GM18951 (cell line): ENCODE measurements at regions of chr16 and their contacts with region 1.

Region 1: DNA sequence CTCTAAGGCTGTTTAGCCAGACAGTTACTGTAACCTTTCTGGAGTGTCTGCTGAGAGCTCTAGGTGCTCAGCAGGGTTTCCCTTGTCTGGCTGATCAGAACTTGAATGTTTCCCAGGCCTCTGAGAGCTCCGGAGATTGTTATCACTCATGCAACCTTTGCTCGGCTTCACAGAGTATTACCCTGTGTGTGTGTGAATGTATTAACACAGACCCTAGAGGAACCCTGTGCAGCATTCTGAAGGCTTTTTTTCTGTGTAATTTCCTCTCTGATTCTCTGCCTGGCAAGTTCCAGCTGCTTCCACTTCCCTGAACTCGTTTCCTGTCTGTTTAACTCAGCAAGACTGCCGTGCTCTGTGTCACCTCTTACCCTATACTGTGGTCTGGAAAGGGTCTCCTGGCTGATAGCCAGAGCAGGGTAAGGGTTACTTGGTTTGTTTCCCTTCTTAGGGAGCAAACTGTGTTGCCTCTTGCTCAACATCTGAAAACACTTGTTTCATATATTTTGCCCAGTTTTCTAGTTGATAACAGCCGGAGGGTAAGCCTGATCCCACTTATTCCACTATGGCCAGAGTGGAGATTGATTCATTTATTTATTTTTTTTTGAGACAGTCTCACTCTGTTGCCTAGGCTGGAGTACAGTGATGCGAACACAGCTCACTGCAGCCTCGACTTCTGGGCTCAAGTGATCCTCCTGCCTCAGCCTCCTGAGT is 21.7 kb downstream of the PRMT7 start:
- POLR2A ChIP-seq: no peak

Region 2: GRCh38 chr16:68237243-68238028 is 95.1 kb before region 1 on chr16:
- in situ Hi-C with region 1: no loop called
- POLR2A ChIP-seq: peak; percentile 81

Region 3: DNA sequence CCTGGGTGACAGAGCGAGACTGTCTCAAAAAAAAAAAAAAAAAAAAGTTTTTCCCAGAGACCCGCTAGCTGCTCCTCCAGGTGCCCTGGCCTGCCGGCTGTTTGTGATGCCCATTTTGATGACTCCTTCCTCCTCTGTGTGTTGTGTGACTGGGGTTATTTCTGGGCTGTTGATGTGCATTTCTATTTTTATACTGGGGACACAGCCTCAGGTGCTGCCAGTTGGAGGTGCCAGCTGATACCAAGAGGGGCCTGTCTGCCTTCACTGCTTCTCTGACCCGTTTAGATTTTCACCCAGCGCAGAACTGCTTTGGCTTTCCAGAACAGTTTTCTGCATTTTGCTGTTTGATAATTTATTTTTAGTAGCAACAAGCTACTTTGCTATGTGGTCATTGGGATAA is 80.7 kb before region 1 on chr16:
- in situ Hi-C with region 1: no loop called
- POLR2A ChIP-seq: no peak

Region 4: GRCh38 chr16:68264128-68265077 is 68.2 kb before region 1 on chr16 and contains the start of gene SLC7A6:
- in situ Hi-C with region 1: loop called (anchors 5 kb)
- POLR2A ChIP-seq: peak; percentile 86

Region 5: GRCh38 chr16:68298907-68299561 is 33.5 kb before region 1 on chr16:
- in situ Hi-C with region 1: no loop called
- POLR2A ChIP-seq: no peak

Region 6: GRCh38 chr16:68607443-68607842 is 274.9 kb after region 1 on chr16:
- in situ Hi-C with region 1: no loop called
- POLR2A ChIP-seq: no peak